Endothelial cell of umbilical vein (primary cell): ENCODE measurements at regions of chr17 and their contacts with region 1.

Region 1: GRCh38 chr17:70622368-70623260 is 453.3 kb downstream of the KCNJ2 start:
- DNase-seq: peak; percentile 76
- H3K4me3 ChIP-seq: no peak overlapping the region
- H3K27ac ChIP-seq: no peak overlapping the region
- H3K4me1 ChIP-seq: peaks cover 5% of the 10 kb centered on the region
- H3K27me3 ChIP-seq: no peaks in the 10 kb centered on the region
- CTCF ChIP-seq: peak; percentile 64 to 79
- POLR2A ChIP-seq: no peak

Region 2: GRCh38 chr17:69539781-69540319 is 1082.8 kb before region 1 on chr17:
- CTCF ChIA-PET with region 1: interaction called, 9 read pairs
- POLR2A ChIA-PET with region 1: no interaction called
- dilution Hi-C with region 1: no loop called
- intact Hi-C with region 1: loop called (anchors 5 kb)
- DNase-seq: peak; percentile 97
- H3K4me3 ChIP-seq: no peak overlapping the region
- H3K27ac ChIP-seq: peak overlapping the region; percentile 89
- H3K4me1 ChIP-seq: peaks cover 18% of the 10 kb centered on the region
- H3K27me3 ChIP-seq: no peaks in the 10 kb centered on the region
- CTCF ChIP-seq: no peak
- POLR2A ChIP-seq: peak; percentile 34

Region 3: GRCh38 chr17:69575346-69575761 is 1047.3 kb before region 1 on chr17:
- CTCF ChIA-PET with region 1: interaction called, 39 read pairs
- POLR2A ChIA-PET with region 1: no interaction called
- dilution Hi-C with region 1: no loop called
- intact Hi-C with region 1: no loop called
- DNase-seq: peak; percentile 82
- H3K4me3 ChIP-seq: no peak overlapping the region
- H3K27ac ChIP-seq: no peak overlapping the region
- H3K4me1 ChIP-seq: peaks cover 18% of the 10 kb centered on the region
- H3K27me3 ChIP-seq: peaks cover 5 to 12% of the 10 kb centered on the region in 2 experiments
- CTCF ChIP-seq: no peak
- POLR2A ChIP-seq: no peak

Region 4: GRCh38 chr17:70278844-70279462 is 343.7 kb before region 1 on chr17:
- CTCF ChIA-PET with region 1: no interaction called
- POLR2A ChIA-PET with region 1: no interaction called
- dilution Hi-C with region 1: no loop called
- intact Hi-C with region 1: loop called (anchors 5 kb)
- DNase-seq: peak; percentile 83
- H3K4me3 ChIP-seq: no peak overlapping the region
- H3K27ac ChIP-seq: no peak overlapping the region
- H3K4me1 ChIP-seq: no peaks in the 10 kb centered on the region
- H3K27me3 ChIP-seq: no peaks in the 10 kb centered on the region
- CTCF ChIP-seq: no peak
- POLR2A ChIP-seq: no peak

Region 5: DNA sequence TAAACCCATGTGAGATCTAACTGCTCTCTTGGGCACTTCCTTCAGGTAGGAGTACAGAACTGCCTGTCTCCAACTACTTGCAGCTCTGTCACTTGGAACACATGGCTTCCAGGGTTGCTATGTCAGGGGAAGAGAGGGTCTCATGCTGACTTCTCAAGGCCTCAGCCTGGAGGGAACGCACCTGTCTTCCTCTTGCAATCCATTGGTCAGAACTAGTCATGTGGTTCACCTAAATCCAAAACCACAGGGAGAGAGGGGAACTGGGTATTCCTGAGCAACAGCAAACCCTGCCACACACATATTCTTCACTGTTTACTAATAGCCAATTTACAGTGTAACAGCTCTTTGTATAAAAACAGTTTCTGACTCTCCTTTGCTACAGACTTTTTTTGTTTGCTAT is 247.2 kb before region 1 on chr17:
- CTCF ChIA-PET with region 1: interaction called, 3 read pairs
- POLR2A ChIA-PET with region 1: no interaction called
- dilution Hi-C with region 1: no loop called
- intact Hi-C with region 1: loop called (anchors 5 kb)
- DNase-seq: no peak
- H3K4me3 ChIP-seq: no peak overlapping the region
- H3K27ac ChIP-seq: no peak overlapping the region
- H3K4me1 ChIP-seq: no peaks in the 10 kb centered on the region
- H3K27me3 ChIP-seq: no peaks in the 10 kb centered on the region
- CTCF ChIP-seq: no peak
- POLR2A ChIP-seq: no peak

Region 6: DNA sequence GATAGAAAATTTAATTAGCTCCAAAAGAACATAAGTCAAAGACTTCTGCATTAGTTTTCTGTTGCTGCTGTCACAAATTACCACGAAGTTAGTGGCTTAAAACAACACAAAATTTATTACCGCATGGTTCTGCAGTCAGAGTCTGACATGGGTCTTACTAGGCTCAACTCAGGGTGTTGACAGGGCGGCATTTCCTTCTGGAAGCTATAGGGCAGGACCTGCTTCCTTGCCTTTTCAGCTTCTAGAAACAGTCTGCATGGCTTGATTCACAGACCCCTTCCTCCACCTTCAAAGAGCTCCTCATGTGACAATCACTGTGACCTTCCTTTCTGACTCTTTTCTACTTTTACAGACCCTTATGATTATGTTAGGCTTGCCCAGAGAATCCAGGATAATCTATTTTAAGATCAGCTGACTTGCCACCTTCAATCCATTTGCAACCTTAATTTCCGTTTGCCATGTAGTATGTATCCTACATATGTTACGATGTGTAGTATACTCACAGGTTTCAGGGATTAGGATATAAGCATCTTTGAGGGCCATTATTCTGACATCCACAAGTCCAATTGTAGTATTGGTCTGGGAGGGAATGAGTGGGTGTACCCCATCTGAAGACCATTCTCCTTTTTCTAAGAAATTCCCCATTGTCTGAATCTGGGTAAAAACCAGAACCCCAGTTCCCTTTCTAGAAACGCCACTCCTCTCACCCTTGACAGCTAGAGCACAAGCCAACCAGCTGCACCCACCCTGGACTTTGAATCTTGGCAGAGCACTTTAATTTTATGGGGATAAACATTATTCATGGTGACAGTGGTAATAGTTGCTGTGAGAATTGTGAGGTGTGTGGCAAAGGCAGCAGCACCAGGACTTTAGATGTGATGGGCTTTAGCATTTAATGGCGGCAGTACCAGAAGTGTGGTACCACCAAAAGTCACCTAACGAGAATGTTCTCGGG is 187.8 kb before region 1 on chr17:
- CTCF ChIA-PET with region 1: no interaction called
- POLR2A ChIA-PET with region 1: no interaction called
- dilution Hi-C with region 1: no loop called
- intact Hi-C with region 1: loop called (anchors 10 kb)
- DNase-seq: peak; percentile 63
- H3K4me3 ChIP-seq: no peak overlapping the region
- H3K27ac ChIP-seq: no peak overlapping the region
- H3K4me1 ChIP-seq: no peaks in the 10 kb centered on the region
- H3K27me3 ChIP-seq: no peaks in the 10 kb centered on the region
- CTCF ChIP-seq: no peak
- POLR2A ChIP-seq: no peak

Region 7: GRCh38 chr17:70552230-70552981 is 70.2 kb before region 1 on chr17:
- CTCF ChIA-PET with region 1: interaction called, 43 read pairs
- POLR2A ChIA-PET with region 1: no interaction called
- dilution Hi-C with region 1: no loop called
- intact Hi-C with region 1: loop called (anchors 5 kb)
- DNase-seq: peak; percentile 75
- H3K4me3 ChIP-seq: no peak overlapping the region
- H3K27ac ChIP-seq: no peak overlapping the region
- H3K4me1 ChIP-seq: no peaks in the 10 kb centered on the region
- H3K27me3 ChIP-seq: no peaks in the 10 kb centered on the region
- CTCF ChIP-seq: peak; percentile 12 to 24
- POLR2A ChIP-seq: no peak

Region 8: DNA sequence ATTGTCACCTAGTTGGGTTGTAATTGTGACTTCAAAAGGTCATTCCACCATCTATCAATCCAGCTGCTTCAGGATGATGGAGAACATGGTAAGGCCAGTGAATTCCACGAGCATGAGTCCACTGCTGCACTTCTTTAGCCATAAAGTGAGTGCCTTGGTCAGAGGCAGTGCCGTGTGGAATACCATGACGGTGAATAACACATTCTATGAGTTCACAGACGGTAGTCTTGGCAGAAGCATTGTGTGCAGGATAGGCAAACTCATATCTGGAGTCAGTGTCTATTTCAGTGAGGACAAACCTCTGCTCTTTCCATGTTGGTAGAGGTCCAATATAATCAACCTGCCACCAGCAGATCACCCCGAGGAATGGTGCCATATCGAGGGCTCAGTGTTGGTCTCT is 197.7 kb after region 1 on chr17:
- CTCF ChIA-PET with region 1: no interaction called
- POLR2A ChIA-PET with region 1: no interaction called
- dilution Hi-C with region 1: no loop called
- intact Hi-C with region 1: no loop called
- DNase-seq: no peak
- H3K4me3 ChIP-seq: no peak overlapping the region
- H3K27ac ChIP-seq: no peak overlapping the region
- H3K4me1 ChIP-seq: no peaks in the 10 kb centered on the region
- H3K27me3 ChIP-seq: no peaks in the 10 kb centered on the region
- CTCF ChIP-seq: no peak
- POLR2A ChIP-seq: no peak